ENCODE measurements at regions of chr19 and their contacts with region 1.

Region 1: DNA sequence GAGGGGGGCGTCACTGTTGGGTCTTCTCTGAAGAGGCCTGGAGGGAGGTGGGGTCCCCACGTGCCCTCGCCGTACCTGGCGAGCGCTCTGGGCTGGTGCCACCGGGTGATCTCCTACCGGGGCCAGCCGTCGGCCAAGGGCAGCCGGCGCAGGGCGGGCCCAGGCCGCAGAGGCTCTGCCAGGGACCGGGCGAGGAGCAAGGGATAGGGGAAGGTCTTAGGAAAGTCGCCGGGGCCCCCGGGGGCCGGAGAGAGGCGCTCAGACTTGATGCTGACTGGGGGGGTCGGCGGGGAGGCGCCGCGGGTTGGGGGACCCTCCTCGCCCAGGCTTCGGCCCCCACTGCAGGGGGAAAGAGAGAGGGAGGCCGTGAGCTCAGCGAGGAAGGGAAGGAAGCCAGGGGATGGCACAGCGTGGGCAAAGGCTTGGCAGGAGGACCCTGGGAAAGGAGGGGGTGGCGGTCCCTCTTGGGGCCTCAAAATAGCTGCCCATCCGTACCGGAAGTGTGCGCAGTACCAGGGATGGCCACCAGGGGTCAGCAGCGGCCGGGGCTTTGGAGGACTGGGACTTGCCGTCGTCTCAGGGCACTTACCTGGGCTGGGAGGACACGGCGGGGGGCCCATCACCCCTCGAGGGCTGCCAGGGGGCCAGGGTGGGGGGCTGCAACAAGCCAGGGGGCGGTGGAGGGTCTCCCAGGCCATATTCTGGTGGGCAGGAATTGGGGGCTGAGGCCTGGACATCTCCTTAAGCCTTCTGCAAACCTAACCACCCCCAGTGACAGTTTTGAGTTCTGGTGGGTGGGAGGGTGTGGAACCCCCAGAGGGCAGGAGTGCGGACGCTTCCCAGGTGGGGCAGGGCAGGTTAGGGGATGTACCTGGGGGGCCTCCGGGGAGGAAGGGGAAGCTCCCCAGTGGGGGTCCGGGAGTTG is 7.7 kb upstream of the TMEM161A start:
- DNase-seq: peak; percentile 53
- H3K27ac ChIP-seq: no peak overlapping the region
- CTCF ChIP-seq: peak; percentile 98

Region 2: GRCh38 chr19:19157808-19158207 is 11.9 kb after region 1 on chr19:
- CTCF ChIA-PET with region 1: interaction called, 10 read pairs
- POLR2A ChIA-PET with region 1: interaction called, 3 read pairs
- DNase-seq: no peak
- H3K27ac ChIP-seq: no peak overlapping the region
- CTCF ChIP-seq: no peak

Region 3: GRCh38 chr19:19176950-19177349 is 31.0 kb after region 1 on chr19:
- CTCF ChIA-PET with region 1: interaction called, 13 read pairs
- POLR2A ChIA-PET with region 1: no interaction called
- DNase-seq: no peak
- H3K27ac ChIP-seq: no peak overlapping the region
- CTCF ChIP-seq: no peak